Endothelial cell of umbilical vein (primary cell): ENCODE measurements at regions of chr6 and their contacts with region 1.

Region 1: DNA sequence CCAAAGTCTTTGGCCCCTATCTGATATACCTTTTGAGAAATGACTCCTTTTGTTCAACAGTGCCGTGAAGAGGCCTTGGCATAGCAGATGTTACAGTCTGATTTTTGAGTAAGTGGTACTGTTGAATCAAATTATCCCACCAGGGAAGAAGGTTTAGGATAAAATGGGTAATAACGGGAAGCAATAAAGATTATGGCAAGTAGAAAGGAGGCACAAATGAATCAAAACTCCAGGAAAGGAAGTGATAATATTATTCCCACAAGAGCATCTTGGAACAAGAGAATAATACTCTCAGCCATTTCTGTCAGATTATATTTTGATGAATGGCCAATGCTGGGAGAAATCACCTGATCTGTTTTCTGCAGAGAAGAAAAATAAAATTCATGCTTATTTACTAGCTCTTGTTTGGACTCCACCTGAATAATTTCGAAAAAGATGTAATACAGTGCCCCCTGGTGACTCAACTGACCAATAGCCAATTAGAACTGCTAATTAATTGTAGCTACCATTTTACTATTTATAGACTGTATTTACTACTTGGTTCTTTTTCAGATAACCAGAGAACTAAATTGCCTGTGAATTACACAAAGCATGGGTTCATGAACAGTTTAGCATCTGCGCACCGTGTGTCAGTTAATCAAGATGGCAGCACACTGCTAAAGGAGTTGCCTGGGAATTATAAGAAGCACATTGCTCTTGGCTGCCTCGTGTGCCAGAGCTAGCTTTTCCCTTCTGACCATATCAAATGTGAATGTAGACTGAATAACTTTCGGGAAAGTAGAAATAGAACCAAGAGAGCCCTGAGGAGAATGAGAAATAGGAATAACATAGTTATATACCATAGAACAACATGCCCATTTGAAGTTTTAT is 78.5 kb upstream of the TRDN start:
- DNase-seq: peak; percentile 55
- H3K4me3 ChIP-seq: no peak overlapping the region
- H3K27ac ChIP-seq: no peak overlapping the region
- H3K4me1 ChIP-seq: no peaks in the 10 kb centered on the region
- H3K27me3 ChIP-seq: peaks cover 5 to 6% of the 10 kb centered on the region in 2 experiments
- CTCF ChIP-seq: peak; percentile 35 to 36
- POLR2A ChIP-seq: no peak

Region 2: GRCh38 chr6:122869437-122870024 is 845.7 kb before region 1 on chr6:
- CTCF ChIA-PET with region 1: interaction called, 43 read pairs
- POLR2A ChIA-PET with region 1: no interaction called
- dilution Hi-C with region 1: no loop called
- intact Hi-C with region 1: no loop called
- DNase-seq: peak; percentile 26
- H3K4me3 ChIP-seq: no peak overlapping the region
- H3K27ac ChIP-seq: no peak overlapping the region
- H3K4me1 ChIP-seq: no peaks in the 10 kb centered on the region
- H3K27me3 ChIP-seq: no peaks in the 10 kb centered on the region
- CTCF ChIP-seq: peak; percentile 13 to 37
- POLR2A ChIP-seq: no peak

Region 3: GRCh38 chr6:123404975-123405374 is 310.3 kb before region 1 on chr6:
- CTCF ChIA-PET with region 1: interaction called, 25 read pairs
- POLR2A ChIA-PET with region 1: no interaction called
- dilution Hi-C with region 1: no loop called
- intact Hi-C with region 1: no loop called
- DNase-seq: no peak
- H3K4me3 ChIP-seq: no peak overlapping the region
- H3K27ac ChIP-seq: no peak overlapping the region
- H3K4me1 ChIP-seq: no peaks in the 10 kb centered on the region
- H3K27me3 ChIP-seq: no peaks in the 10 kb centered on the region
- CTCF ChIP-seq: no peak
- POLR2A ChIP-seq: no peak

Region 4: GRCh38 chr6:123439371-123439770 is 275.9 kb before region 1 on chr6:
- CTCF ChIA-PET with region 1: interaction called, 10 read pairs
- POLR2A ChIA-PET with region 1: no interaction called
- dilution Hi-C with region 1: no loop called
- intact Hi-C with region 1: no loop called
- DNase-seq: no peak
- H3K4me3 ChIP-seq: no peak overlapping the region
- H3K27ac ChIP-seq: no peak overlapping the region
- H3K4me1 ChIP-seq: no peaks in the 10 kb centered on the region
- H3K27me3 ChIP-seq: no peaks in the 10 kb centered on the region
- CTCF ChIP-seq: no peak
- POLR2A ChIP-seq: no peak

Region 5: GRCh38 chr6:123702943-123703342 is 12.3 kb before region 1 on chr6:
- CTCF ChIA-PET with region 1: interaction called, 20 read pairs
- POLR2A ChIA-PET with region 1: no interaction called
- dilution Hi-C with region 1: no loop called
- intact Hi-C with region 1: no loop called
- DNase-seq: no peak
- H3K4me3 ChIP-seq: no peak overlapping the region
- H3K27ac ChIP-seq: no peak overlapping the region
- H3K4me1 ChIP-seq: no peaks in the 10 kb centered on the region
- H3K27me3 ChIP-seq: peaks cover 0 to 6% of the 10 kb centered on the region in 2 experiments
- CTCF ChIP-seq: no peak
- POLR2A ChIP-seq: no peak

Region 6: DNA sequence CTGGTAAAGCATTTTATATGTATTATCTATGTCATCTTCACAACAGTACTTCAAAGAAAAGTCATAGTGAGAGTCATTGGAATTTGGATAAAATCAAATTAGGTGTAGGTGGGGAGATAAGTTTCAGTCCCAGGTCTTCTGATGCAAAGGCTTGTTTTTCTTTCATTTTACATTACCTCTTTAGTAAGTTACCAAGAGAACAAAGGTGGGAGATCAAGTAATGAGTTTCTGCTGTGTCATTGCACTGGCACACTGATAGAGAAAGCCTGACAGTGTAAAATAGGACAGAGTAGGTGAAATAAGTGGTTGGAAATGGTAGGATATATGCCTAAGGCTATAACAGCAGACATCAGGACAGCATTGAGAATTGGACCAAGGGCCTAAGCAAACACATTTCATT is 338.8 kb after region 1 on chr6:
- CTCF ChIA-PET with region 1: no interaction called
- POLR2A ChIA-PET with region 1: no interaction called
- dilution Hi-C with region 1: no loop called
- intact Hi-C with region 1: no loop called
- DNase-seq: peak; percentile 10
- H3K4me3 ChIP-seq: no peak overlapping the region
- H3K27ac ChIP-seq: no peak overlapping the region
- H3K4me1 ChIP-seq: peaks cover 11% of the 10 kb centered on the region
- H3K27me3 ChIP-seq: no peaks in the 10 kb centered on the region
- CTCF ChIP-seq: no peak
- POLR2A ChIP-seq: no peak